ENCODE measurements at regions of chr14 and their contacts with region 1.

Region 1: DNA sequence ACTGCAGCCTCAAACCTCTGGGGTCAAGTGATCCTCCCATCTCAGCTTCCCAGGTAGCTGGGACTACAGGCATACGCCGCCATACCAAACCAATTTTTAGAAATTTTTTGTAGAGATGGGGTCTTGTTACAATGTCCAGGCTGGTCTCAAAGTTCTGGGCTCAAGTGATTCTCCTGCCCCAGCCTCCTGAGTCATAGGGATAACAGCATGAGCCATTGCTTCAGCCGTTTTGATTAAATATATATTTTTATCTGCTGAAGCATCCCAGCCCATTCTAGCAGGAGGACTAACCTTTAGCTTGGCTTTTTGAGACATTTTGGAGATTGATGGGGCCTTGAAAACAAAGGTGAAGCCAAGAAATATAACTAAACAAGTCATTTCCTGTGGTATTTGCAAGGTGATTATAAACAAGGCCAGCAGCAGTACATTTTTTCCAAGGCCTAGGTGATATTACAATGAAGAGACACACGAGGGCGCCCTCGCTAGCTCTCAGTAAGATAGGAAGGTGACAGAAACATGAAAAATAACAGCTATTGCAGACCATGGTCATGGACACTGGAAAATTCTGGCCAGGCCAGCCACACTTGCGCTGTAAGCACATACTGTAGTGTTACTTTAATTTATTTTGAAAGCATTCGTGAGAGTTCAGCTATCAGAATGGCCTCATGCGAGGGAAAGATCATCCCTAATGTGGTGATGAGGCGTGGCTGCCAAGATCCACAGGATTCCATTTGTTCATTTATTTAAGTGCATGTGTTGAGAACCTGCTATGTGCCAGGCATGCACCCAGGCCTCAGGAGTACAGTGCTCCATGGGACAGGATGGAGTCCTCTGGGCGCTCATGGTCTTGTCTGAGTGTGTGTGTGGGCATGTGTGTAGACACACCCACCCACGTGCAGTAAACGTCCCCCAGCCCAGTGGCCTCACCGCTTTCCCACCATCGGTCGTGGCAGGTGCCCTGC is 63.5 kb downstream of the DGLUCY start:
- DNase-seq: peak; percentile 76
- CTCF ChIP-seq: peak; percentile 73

Region 2: GRCh38 chr14:90903101-90903500 is 274.3 kb before region 1 on chr14:
- CTCF ChIA-PET with region 1: interaction called, 145 read pairs
- POLR2A ChIA-PET with region 1: no interaction called
- DNase-seq: peak; percentile 72
- CTCF ChIP-seq: peak; percentile 72

Region 3: GRCh38 chr14:90922141-90922540 is 255.2 kb before region 1 on chr14:
- CTCF ChIA-PET with region 1: no interaction called
- POLR2A ChIA-PET with region 1: no interaction called
- DNase-seq: no peak
- CTCF ChIP-seq: no peak

Region 4: GRCh38 chr14:91154851-91155625 is 22.3 kb before region 1 on chr14:
- CTCF ChIA-PET with region 1: interaction called, 76 read pairs
- POLR2A ChIA-PET with region 1: no interaction called
- DNase-seq: no peak
- CTCF ChIP-seq: no peak

Region 5: DNA sequence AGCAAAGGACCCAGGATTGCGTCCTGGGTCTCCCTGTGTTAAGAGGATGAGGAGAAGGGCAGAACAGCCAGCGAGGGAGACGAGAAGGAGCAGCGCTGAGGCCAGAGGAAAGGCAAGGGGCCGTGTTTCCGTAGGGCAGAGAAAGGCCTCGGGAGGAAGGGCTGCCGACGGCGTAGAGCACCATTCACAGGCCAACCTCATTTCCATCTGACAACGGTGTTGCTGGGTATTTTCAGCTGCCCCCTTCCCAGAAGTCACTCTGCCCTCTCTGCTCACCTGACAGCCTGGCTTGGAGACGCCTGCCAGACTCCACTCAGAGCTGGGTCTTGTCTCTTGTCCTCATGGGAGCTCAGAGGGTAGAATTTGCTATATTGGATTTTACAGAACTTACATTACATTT is 15.7 kb after region 1 on chr14:
- CTCF ChIA-PET with region 1: interaction called, 16 read pairs
- POLR2A ChIA-PET with region 1: no interaction called
- DNase-seq: no peak
- CTCF ChIP-seq: no peak

Region 6: DNA sequence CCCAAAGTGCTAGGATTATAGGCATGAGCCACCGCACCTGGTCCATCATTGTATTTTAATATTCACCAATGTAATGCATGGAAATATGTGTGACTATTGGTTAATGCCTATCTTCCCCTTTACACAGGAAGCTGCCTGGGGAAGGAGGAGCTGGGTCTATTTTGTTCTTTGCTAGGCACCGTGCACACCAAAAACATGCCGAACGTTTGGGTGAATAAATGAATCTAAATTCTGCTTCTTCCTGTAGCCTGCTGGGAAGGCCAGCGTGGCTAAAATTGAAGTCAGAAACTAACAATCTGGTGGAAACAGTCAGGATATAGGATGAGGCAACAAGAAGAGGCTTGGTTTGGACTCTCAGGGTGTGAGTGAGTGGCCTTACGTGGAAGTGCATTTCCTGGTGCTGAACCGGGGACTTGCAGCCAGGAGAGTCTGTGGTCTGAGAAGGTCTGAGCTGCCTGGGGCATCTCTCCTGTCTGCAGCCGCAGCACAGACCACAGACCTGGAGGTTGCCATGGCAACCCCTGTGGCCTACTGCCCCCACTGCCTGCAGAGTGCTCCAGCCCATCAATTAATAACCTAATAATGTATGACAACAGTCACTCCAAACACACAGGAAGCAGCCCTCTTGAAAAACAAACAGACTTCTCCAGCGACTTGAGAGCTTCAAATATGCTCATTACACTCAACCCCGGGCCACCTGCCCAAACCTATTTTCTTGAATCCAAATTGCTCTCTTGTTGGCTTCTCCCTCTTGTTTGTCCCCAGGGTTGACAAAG is 72.7 kb after region 1 on chr14:
- CTCF ChIA-PET with region 1: interaction called, 17 read pairs
- POLR2A ChIA-PET with region 1: no interaction called
- DNase-seq: peak; percentile 82
- CTCF ChIP-seq: no peak

Region 7: DNA sequence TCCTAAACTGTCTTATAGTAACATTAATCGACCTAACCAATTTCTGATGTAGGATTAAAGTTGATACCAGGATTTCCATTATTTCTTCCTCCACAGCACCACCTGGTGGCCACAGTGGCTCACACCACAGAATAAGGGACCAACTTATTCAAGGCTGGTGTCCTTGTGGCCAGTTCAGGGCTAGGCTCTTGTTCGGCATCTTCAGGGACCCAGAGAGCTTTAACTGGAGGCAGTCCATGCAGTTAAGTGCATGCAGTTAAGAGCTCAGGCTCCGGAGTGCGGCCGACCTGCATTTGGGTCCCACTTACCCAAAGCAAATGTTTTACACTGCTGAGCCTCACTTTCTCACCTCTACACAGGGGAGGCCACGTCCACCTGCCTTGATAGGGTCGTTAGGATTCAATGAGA is 109.2 kb after region 1 on chr14:
- CTCF ChIA-PET with region 1: interaction called, 197 read pairs
- POLR2A ChIA-PET with region 1: no interaction called
- DNase-seq: peak; percentile 79
- CTCF ChIP-seq: peak; percentile 87

Measured in GM10248 (cell line).